Right cardiac atrium (tissue), 5 donors: ENCODE measurements at regions of chr5 and their contacts with region 1.

Region 1: DNA sequence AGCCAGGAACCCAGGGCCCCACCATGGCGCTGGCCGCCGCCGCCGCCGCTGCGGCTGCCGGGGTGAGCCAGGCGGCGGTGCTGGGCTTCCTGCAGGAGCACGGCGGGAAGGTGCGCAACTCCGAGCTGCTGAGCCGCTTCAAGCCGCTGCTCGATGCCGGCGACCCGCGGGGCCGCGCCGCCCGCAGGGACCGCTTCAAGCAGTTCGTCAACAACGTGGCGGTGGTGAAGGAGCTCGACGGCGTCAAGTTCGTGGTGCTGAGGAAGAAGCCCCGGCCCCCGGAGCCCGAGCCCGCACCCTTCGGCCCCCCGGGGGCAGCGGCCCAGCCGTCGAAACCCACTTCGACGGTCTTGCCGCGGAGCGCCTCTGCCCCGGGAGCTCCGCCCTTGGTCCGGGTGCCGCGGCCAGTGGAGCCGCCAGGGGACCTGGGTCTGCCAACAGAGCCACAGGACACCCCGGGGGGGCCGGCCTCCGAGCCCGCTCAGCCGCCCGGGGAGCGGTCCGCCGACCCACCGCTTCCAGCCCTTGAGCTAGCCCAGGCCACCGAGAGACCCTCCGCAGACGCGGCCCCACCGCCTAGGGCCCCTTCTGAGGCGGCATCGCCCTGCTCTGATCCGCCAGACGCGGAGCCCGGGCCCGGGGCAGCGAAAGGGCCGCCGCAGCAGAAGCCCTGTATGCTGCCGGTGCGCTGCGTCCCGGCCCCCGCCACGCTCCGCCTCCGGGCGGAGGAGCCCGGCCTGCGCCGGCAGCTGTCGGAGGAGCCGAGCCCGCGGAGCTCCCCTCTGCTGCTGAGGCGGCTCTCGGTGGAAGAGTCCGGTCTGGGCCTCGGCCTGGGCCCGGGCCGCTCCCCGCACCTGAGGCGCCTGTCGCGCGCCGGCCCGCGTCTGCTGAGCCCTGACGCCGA is 749 bp downstream of the SOWAHA start:
- DNase-seq: peak in 2 of 3 donors; percentile 61 to 67
- ATAC-seq: peak; percentile 60 to 68
- H3K4me3 ChIP-seq: peak overlapping the region; percentile 57
- H3K27ac ChIP-seq: no peak overlapping the region
- H3K4me1 ChIP-seq: no peaks in the 10 kb centered on the region
- H3K27me3 ChIP-seq: no peaks in the 10 kb centered on the region

Region 2: DNA sequence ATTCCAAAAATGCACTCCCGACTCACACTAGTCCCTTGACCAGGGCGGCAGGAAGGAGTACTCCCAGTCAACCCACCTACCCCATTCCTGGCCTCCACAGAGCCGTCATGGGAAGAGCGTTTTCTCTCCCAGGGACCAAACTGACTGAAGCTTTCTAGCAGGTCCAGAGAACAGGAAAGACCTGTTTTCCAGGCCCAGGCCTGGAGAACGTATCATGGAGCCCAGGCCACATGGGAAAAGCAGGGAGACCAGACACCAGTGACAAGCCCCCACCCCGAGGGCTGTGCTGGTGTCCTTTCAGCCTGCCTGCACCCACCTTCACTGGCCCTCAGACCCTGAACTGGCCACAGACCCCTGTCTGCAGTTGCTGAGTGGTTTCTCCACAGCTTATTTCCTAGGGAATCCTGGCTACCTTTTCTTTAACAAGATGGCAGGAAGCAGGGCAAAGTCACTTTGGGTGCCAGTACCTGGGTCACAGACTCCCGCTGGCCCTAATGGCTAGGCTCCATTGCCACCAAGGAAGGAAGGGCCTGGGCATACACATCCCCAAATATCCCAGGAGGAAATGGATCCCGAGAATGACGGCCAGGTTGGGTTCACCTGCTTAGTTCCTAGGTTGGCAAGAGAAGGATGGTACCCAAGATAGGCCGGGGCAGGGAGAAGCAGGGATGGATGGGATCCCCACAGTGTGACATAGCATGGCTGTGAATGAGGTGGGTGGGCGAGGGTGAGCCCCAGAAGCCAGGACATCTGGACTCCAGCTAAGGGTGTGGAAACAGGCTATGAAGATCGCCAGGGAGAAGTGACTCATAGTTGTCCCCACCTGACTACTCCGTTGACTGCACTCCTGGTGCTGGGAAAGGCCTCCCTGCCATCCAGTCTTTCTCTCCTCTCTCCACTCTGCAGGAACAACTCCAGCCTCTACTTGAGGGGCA is 54.5 kb before region 1 on chr5:
- intact Hi-C with region 1: loop called in 1 of 4 experiments (anchors 10 kb)
- DNase-seq: no peak
- ATAC-seq: no peak
- H3K4me3 ChIP-seq: no peak overlapping the region
- H3K27ac ChIP-seq: no peak overlapping the region
- H3K4me1 ChIP-seq: no peaks in the 10 kb centered on the region
- H3K27me3 ChIP-seq: no peaks in the 10 kb centered on the region